ENCODE measurements at regions of chr4 and their contacts with region 1.

Region 1: GRCh38 chr4:100189820-100190642 is at the start of gene DDIT4L:
- DNase-seq: peak; percentile 73
- H3K4me3 ChIP-seq: peak within 1 kb of the TSS; percentile 59 to 69 (median 62)
- H3K27ac ChIP-seq: peak within 1 kb of the TSS; percentile 9 to 54 (median 48)
- H3K4me1 ChIP-seq: peaks cover 0 to 19% (median 9%) of the 10 kb centered on the region in 4 donors
- H3K27me3 ChIP-seq: no peaks in the 10 kb centered on the region
- CTCF ChIP-seq: no peak
- EP300 ChIP-seq: no peak
- POLR2A ChIP-seq: no peak
- total RNA-seq, gene DDIT4L: 1.5 to 6.1 (median 4.2) TPM

Region 2: DNA sequence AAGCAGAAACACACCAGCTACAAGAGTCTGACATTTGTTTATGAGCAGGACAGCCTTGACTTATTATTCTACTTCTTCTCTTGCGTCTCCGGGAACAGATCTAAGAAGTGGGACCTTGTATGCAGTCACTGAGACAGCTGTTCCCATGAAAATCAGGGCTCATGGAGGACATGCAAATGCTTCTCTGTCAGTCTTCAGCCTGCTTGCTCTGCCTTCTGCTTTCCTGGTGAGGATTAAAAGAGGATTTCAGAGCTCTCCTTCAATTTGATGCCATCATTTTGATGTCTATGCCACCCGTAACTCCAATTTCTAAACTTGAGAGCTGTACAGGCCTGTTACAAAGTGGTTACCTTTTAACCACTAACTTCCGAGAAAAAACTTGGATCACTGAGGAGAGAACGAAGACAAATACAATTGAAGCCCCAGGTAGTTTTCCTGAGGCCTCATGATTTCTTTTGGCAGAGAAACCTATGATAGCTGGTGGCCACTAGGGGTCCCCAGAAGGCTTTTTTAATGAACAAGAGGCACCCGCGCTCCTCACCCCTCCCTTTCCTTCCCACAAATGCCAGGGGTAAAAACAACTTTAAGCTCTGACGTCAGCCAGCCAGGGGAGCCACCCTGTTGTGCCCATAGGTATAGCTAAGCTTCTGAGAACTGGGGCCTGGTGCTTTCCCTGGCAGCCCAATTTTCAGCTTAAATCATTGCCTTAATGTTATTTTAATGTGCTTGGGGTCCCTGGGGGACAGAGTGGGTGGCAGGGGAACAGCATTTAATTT is 96.8 kb before region 1 on chr4:
- intact Hi-C with region 1: loop called (anchors 10 kb)
- DNase-seq: peak; percentile 92
- H3K4me3 ChIP-seq: no peak overlapping the region
- H3K27ac ChIP-seq: peak overlapping the region; percentile 18 to 49 (median 29)
- H3K4me1 ChIP-seq: peaks cover 0 to 11% (median 8%) of the 10 kb centered on the region in 4 donors
- H3K27me3 ChIP-seq: no peaks in the 10 kb centered on the region
- CTCF ChIP-seq: peak; percentile 42 to 80 (median 52)
- EP300 ChIP-seq: peak in 1 of 4 donors; percentile 21
- POLR2A ChIP-seq: no peak

Region 3: DNA sequence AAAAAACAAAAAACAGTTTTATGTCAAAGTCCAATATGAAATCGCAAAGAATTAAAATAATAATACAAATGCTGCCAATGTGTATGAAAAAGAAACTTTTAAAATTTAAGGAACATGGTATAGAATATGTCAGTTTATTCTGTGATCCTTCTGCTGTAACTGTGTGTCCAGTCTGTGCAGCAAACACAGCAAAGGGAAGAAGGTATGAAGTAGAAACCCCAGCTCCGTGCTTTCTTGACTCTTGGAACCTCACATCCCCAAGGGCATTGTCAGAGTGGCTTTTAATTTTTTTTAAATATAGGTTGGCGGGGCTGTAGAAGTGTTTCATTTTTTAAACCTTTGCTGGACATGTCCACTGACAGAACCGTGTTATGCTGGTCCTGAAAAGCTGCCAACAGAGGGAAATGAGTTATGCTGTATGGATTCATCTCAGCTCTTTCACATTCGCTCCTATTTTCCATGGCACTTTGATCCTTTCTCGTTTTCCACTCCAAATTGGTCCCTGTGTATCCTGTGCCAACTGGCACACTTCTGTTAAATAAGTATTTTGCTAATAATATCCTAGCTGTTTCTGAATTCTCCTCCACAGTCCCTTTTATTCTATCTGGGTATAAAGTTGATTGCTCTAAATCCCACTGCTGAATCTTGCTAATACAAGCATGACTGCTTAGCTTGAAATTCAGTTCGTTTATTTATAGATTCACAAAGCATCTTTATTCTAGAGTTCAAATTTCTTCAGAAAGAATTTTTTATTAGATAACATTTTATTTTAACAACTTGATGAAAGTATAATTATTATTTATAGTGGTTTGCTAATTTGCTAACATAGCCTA is 127.2 kb after region 1 on chr4:
- intact Hi-C with region 1: no loop called
- DNase-seq: no peak
- H3K4me3 ChIP-seq: peak overlapping the region in 1 of 4 donors; percentile 12
- H3K27ac ChIP-seq: peak overlapping the region in 1 of 4 donors; percentile 15
- H3K4me1 ChIP-seq: peaks cover 0 to 21% (median 6%) of the 10 kb centered on the region in 4 donors
- H3K27me3 ChIP-seq: no peaks in the 10 kb centered on the region
- CTCF ChIP-seq: no peak
- EP300 ChIP-seq: no peak
- POLR2A ChIP-seq: no peak